Left ventricle myocardium superior (tissue), 1 donor: ENCODE measurements at regions of chr19 and their contacts with region 1.

Region 1: GRCh38 chr19:51020988-51021651 is 1.6 kb upstream of the KLK10 start:
- DNase-seq: no peak
- ATAC-seq: peak; percentile 59

Region 2: DNA sequence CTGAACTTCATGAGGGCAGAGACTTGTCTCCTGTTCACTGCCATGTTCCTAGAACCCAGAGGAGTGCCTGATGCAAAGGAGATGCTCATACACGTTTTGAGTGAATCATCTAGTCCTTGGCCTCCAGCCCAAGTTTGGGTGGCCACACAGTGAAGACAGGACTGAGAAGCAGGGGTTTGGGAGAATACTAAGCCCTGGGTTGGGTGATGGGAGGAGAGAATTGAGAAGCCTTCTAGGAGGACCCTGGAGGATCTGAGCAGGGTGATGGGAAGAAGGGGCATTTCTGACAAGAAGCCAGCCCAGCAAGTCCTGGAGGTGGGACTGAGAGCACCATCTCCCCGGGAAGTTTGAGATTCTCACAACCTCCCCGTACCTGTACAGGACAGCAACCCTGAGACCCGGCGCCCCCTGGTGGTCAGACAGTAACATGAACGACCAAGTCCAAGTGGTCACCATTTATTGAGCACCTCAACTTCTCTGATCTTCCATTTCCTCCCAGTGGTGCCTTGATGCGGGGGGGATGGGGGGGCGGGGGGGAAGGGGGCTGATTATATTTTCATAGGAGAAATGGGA is 76.1 kb after region 1 on chr19:
- intact Hi-C with region 1: loop called (anchors 5 kb)
- DNase-seq: peak; percentile 75
- ATAC-seq: peak; percentile 61